GM13977 (cell line): ENCODE measurements at regions of chr20 and their contacts with region 1.

Region 1: GRCh38 chr20:21129861-21130260 is 4.0 kb downstream of the KIZ start:
- DNase-seq: no peak
- CTCF ChIP-seq: no peak

Region 2: GRCh38 chr20:21189761-21190523 is 60.1 kb after region 1 on chr20:
- in situ Hi-C with region 1: loop called (anchors 10 kb)
- DNase-seq: no peak
- CTCF ChIP-seq: no peak